CD8-positive, alpha-beta T cell (primary cell): ENCODE measurements at regions of chr15 and their contacts with region 1.

Region 1: DNA sequence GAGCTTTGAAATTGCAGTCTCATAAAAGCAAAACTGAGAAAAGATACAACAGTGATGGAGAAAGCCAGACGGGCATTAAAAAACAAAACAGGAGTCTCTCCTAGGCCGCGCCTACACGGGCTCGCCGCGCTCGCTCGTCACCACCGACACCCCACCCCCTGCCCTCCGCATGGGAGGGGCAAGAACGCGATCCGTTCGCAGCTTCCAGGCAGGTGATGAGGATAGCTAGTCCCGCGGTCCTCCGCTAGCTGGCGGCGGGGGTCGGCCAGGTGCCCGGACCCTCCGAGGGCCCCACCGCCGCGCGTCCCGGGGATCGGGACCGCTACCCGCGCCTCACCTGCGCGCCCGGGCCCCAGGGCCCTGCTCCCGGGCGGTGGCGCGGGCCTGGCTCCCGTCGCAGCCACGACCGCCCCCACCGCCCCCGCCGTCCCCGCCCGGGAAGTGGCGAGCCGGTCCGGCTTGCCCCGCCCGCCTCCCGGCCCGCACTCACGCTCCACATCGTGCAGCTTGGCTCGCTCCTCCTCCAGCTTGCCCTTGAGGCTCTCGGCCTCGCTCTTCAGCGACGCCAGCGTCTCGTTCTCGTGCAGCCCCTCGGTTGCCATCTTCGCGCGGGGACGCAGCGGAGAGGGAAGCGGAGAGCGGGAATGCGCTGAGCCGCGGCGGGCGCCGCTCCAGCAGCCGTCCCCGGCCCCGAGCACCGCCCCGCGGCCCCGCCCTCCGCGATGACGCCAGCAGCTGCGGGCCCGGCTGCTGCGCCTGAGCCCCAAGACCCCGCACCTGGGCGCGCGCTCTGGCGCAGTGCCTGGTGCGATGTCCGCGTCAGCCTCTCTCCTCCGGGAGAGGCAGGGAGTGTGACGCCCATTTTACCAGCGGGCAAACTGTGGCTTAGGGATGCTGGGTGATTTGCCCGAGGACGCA is 11.7 kb downstream of the GNB5 start:
- DNase-seq: peak; percentile 83 to 95 (median 89)
- ATAC-seq: peak; percentile 84
- H3K4me3 ChIP-seq: peak overlapping the region; percentile 94 to 96
- H3K4me3 Mint-ChIP-seq: peak overlapping the region; percentile 93
- H3K27ac ChIP-seq: peak overlapping the region; percentile 95 to 99
- H3K27ac Mint-ChIP-seq: peak overlapping the region; percentile 99
- H3K4me1 ChIP-seq: peaks cover 16% of the 10 kb centered on the region
- H3K4me1 Mint-ChIP-seq: peaks cover 38% of the 10 kb centered on the region
- H3K27me3 ChIP-seq: no peaks in the 10 kb centered on the region
- H3K27me3 Mint-ChIP-seq: no peaks in the 10 kb centered on the region
- CTCF ChIP-seq: no peak

Region 2: GRCh38 chr15:51731549-51732267 is 447.8 kb before region 1 on chr15:
- CTCF ChIA-PET with region 1: no interaction called
- POLR2A ChIA-PET with region 1: interaction called, 10 read pairs
- intact Hi-C with region 1: loop called (anchors 5 kb)
- DNase-seq: peak in 6 of 9 experiments; percentile 26 to 89 (median 50)
- ATAC-seq: peak; percentile 65
- H3K4me3 ChIP-seq: peak overlapping the region; percentile 38 to 42
- H3K4me3 Mint-ChIP-seq: peak overlapping the region; percentile 93
- H3K27ac ChIP-seq: peak overlapping the region; percentile 60 to 92
- H3K27ac Mint-ChIP-seq: peak overlapping the region; percentile 99
- H3K4me1 ChIP-seq: peaks cover 72% of the 10 kb centered on the region
- H3K4me1 Mint-ChIP-seq: peaks cover 92% of the 10 kb centered on the region
- H3K27me3 ChIP-seq: no peaks in the 10 kb centered on the region
- H3K27me3 Mint-ChIP-seq: no peaks in the 10 kb centered on the region
- CTCF ChIP-seq: no peak

Region 3: DNA sequence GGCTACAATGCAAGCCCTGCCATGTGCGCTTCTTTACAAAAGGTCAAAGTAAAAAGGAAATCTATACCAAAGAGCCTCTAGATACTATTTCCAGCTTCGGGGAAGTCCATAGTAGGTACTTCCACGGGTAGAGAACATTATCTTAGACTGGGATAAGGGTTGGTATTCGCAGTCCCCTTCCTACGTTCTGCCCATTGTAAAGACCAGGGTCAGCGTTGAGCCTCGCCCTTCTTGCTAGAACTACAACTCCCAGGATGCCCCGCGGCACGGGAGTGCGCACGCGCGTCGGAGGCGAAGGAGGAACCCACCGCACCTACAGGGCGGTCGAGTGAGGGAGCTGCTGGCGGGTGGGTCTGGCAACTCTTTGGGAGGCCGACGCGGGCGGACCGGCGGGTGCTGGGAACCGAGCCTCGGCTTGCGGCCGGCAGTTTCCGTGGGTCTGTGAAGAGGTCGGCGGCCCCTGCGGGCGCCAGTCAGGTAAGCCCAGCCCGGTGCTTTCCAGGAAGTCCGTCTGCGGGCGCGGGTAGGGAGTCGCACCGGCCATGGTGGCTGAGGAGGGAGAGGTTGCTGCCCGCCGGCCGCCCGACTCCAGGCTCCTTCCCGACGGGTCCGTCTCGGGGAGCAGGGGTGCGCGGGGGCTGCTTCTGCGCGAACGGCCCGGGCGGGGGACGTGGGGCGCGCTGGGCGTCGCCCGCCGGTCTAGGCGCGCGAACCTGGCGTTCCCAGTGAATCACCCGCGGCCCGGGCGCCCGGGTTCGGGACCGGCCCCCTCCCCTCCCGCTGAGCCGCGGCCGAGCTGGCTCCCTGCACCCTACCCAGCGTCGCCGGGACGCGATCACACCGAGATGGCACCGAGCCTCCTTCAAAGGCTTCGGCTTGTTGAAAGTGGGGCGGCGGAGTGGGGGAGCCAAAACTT is 349.9 kb before region 1 on chr15 and contains the start of gene TMOD3:
- CTCF ChIA-PET with region 1: no interaction called
- POLR2A ChIA-PET with region 1: no interaction called
- intact Hi-C with region 1: loop called in 1 of 2 experiments (anchors 5 kb)
- DNase-seq: peak; percentile 74 to 94 (median 90)
- ATAC-seq: peak; percentile 83
- H3K4me3 ChIP-seq: peak within 1 kb of the TSS; percentile 64 to 83
- H3K4me3 Mint-ChIP-seq: peak within 1 kb of the TSS; percentile 99
- H3K27ac ChIP-seq: peak within 1 kb of the TSS; percentile 66 to 74
- H3K27ac Mint-ChIP-seq: peak within 1 kb of the TSS; percentile 95
- H3K4me1 ChIP-seq: peaks cover 38% of the 10 kb centered on the region
- H3K4me1 Mint-ChIP-seq: peaks cover 42% of the 10 kb centered on the region
- H3K27me3 ChIP-seq: no peaks in the 10 kb centered on the region
- H3K27me3 Mint-ChIP-seq: no peaks in the 10 kb centered on the region
- CTCF ChIP-seq: no peak
- total RNA-seq, gene TMOD3: 32.7 to 32.9 TPM

Region 4: DNA sequence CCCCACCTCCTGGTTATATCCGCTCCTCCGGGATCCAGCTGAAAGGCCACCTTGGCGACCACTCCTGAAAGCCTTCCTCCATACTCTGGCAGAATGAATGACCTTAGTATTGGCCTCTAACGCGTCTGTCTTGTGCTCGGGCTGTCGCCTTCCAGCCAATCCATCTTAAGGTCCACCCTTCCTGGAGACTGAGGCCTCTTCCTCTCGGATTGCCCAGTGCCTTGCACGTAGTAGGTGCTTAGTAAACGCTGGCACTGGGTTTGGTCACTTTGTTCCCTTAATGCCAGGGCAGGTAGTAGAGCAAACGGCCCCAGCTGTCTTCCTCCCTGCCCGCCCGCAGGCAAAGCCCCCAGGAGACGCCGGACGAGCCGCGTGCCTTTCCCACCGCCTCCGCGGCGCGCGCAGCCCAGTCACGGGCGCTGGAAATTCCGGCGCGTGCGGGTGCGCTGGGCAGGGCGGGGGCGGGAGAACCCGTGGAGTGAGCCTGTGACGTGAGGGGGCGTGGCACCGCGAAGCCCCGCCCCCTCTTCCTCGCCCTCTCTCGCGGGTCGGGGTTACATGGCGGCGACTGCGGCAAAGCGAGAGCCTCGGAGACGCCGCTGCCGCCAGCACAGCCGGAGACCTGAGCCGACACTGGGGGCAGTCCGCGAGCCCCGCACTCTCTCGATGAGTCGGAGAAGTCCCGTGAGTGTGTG is 160.7 kb before region 1 on chr15 and contains the start of gene MAPK6:
- CTCF ChIA-PET with region 1: interaction called, 3 read pairs
- POLR2A ChIA-PET with region 1: interaction called, 5 read pairs
- intact Hi-C with region 1: loop called (anchors 1 to 5 kb)
- DNase-seq: peak; percentile 89 to 98 (median 92)
- ATAC-seq: peak; percentile 87
- H3K4me3 ChIP-seq: peak within 1 kb of the TSS; percentile 74 to 84
- H3K4me3 Mint-ChIP-seq: peak within 1 kb of the TSS; percentile 97
- H3K27ac ChIP-seq: peak within 1 kb of the TSS; percentile 74 to 84
- H3K27ac Mint-ChIP-seq: peak within 1 kb of the TSS; percentile 99
- H3K4me1 ChIP-seq: peaks cover 29% of the 10 kb centered on the region
- H3K4me1 Mint-ChIP-seq: peaks cover 35% of the 10 kb centered on the region
- H3K27me3 ChIP-seq: no peaks in the 10 kb centered on the region
- H3K27me3 Mint-ChIP-seq: no peaks in the 10 kb centered on the region
- CTCF ChIP-seq: no peak
- total RNA-seq, gene MAPK6: 39.8 to 42.5 TPM

Region 5: GRCh38 chr15:52163321-52164190 is 16.0 kb before region 1 on chr15:
- CTCF ChIA-PET with region 1: interaction called, 25 read pairs
- POLR2A ChIA-PET with region 1: interaction called, 14 read pairs
- intact Hi-C with region 1: loop called in 1 of 2 experiments (anchors 2 kb)
- DNase-seq: peak in 5 of 9 experiments; percentile 31 to 55 (median 40)
- ATAC-seq: peak; percentile 46
- H3K4me3 ChIP-seq: no peak overlapping the region
- H3K4me3 Mint-ChIP-seq: no peak overlapping the region
- H3K27ac ChIP-seq: no peak overlapping the region
- H3K27ac Mint-ChIP-seq: no peak overlapping the region
- H3K4me1 ChIP-seq: peaks cover 4% of the 10 kb centered on the region
- H3K4me1 Mint-ChIP-seq: peaks cover 35% of the 10 kb centered on the region
- H3K27me3 ChIP-seq: no peaks in the 10 kb centered on the region
- H3K27me3 Mint-ChIP-seq: no peaks in the 10 kb centered on the region
- CTCF ChIP-seq: peak; percentile 31

Region 6: DNA sequence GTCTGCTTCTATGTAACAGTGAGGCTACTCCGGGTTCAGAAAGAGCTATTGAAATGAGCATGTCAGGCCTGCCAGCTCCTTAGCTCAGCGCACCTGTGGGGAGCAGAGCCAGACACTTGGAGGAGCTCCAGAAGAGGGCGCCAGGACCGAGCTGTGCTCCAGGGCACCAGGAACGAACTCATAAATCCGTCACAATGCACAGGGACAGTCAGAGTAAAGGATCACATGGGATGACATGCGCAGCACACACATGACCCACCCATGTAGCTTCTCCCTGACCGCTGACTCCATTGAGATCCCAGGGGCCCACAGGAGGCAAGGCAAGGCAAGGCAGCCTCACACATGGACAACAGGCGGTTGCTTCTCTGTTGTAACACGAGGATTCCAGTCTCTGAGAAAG is 37.6 kb after region 1 on chr15:
- CTCF ChIA-PET with region 1: interaction called, 10 read pairs
- POLR2A ChIA-PET with region 1: interaction called, 13 read pairs
- intact Hi-C with region 1: no loop called
- DNase-seq: peak in 2 of 9 experiments; percentile 19 to 29
- ATAC-seq: peak; percentile 34
- H3K4me3 ChIP-seq: no peak overlapping the region
- H3K4me3 Mint-ChIP-seq: no peak overlapping the region
- H3K27ac ChIP-seq: no peak overlapping the region
- H3K27ac Mint-ChIP-seq: no peak overlapping the region
- H3K4me1 ChIP-seq: peaks cover 17% of the 10 kb centered on the region
- H3K4me1 Mint-ChIP-seq: peaks cover 17% of the 10 kb centered on the region
- H3K27me3 ChIP-seq: no peaks in the 10 kb centered on the region
- H3K27me3 Mint-ChIP-seq: no peaks in the 10 kb centered on the region
- CTCF ChIP-seq: no peak

Region 7: GRCh38 chr15:52281085-52282035 is 101.8 kb after region 1 on chr15:
- CTCF ChIA-PET with region 1: no interaction called
- POLR2A ChIA-PET with region 1: no interaction called
- intact Hi-C with region 1: no loop called
- DNase-seq: no peak
- ATAC-seq: no peak
- H3K4me3 ChIP-seq: no peak overlapping the region
- H3K4me3 Mint-ChIP-seq: no peak overlapping the region
- H3K27ac ChIP-seq: no peak overlapping the region
- H3K27ac Mint-ChIP-seq: no peak overlapping the region
- H3K4me1 ChIP-seq: no peaks in the 10 kb centered on the region
- H3K4me1 Mint-ChIP-seq: no peaks in the 10 kb centered on the region
- H3K27me3 ChIP-seq: no peaks in the 10 kb centered on the region
- H3K27me3 Mint-ChIP-seq: peaks cover 3% of the 10 kb centered on the region
- CTCF ChIP-seq: no peak